ENCODE measurements at regions of chr12 and their contacts with region 1.

Region 1: GRCh38 chr12:122871851-122872780 is 23.8 kb downstream of the VPS37B start:
- DNase-seq: peak; percentile 84
- H3K4me3 ChIP-seq: peak overlapping the region in 2 of 3 experiments; percentile 25 to 60
- H3K27ac ChIP-seq: peak overlapping the region; percentile 92
- H3K4me1 ChIP-seq: peaks cover 32% of the 10 kb centered on the region
- H3K27me3 ChIP-seq: no peaks in the 10 kb centered on the region
- CTCF ChIP-seq: no peak
- POLR2A ChIP-seq: no peak

Region 2: DNA sequence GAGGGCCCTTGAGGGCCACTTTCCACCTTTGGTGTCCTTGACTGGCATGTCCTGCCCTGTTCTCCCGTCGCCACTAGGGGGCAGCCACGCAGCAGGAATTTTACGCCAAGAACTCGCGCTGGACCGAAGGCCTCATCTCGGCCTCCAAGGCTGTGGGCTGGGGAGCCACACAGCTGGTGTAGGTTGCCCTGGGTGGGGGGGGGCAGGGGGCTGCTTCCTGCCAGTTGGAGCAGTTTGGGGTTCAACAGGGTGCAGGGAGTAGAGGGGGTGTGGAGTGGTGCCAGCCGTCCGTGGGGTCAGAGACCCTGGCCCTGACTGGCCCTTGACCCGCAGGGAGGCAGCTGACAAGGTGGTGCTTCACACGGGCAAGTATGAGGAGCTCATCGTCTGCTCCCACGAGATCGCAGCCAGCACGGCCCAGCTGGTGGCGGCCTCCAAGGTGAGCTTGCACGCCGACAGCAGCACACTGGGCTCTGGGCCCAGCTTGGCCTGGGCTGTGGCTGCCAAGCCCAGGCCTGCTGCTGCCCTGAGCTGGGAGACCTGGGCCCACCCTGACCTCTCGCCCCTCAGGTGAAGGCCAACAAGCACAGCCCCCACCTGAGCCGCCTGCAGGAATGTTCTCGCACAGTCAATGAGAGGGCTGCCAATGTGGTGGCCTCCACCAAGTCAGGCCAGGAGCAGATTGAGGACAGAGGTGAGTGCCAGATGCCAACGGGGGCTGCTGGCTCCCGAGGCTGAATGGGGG is 11.6 kb before region 1 on chr12:
- CTCF ChIA-PET with region 1: interaction called, 15 read pairs
- POLR2A ChIA-PET with region 1: no interaction called
- dilution Hi-C with region 1: no loop called
- intact Hi-C with region 1: no loop called
- DNase-seq: peak; percentile 63
- H3K4me3 ChIP-seq: no peak overlapping the region
- H3K27ac ChIP-seq: no peak overlapping the region
- H3K4me1 ChIP-seq: no peaks in the 10 kb centered on the region
- H3K27me3 ChIP-seq: no peaks in the 10 kb centered on the region
- CTCF ChIP-seq: peak; percentile 80 to 88
- POLR2A ChIP-seq: no peak

Region 3: DNA sequence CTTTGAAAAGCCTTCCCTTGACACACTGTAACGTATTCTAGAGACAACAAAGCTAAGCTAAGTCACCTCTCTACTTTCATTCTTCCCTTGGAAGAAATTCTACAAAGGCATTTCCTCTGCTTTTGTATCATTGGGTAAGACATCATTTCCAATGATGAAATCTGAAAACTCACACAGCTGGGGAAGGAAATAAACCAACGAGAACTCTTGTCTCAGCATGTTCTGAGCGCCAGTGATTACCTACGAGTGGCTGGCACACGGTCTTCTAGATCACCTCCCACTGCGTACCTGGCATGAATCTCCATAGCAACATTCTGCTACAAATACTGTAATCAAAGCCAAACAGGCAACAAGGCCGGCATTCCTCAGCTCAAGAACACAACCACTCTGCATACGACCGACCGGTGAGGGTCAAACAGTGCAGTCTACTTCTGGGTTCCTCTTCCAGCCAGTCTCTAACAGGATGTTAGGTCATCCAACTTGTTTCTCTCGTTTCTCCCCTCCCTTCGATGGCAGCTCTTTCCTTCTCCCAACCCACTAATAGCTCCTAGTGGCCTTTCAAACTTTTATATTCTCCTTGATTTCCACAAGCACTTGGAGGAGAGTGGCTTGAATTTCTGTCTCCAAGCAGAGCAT is 16.2 kb after region 1 on chr12:
- CTCF ChIA-PET with region 1: interaction called, 15 read pairs
- POLR2A ChIA-PET with region 1: interaction called, 3 read pairs
- dilution Hi-C with region 1: no loop called
- intact Hi-C with region 1: loop called (anchors 1 kb)
- DNase-seq: peak; percentile 96
- H3K4me3 ChIP-seq: peak overlapping the region in 2 of 3 experiments; percentile 10 to 24
- H3K27ac ChIP-seq: peak overlapping the region; percentile 87
- H3K4me1 ChIP-seq: peaks cover 67% of the 10 kb centered on the region
- H3K27me3 ChIP-seq: no peaks in the 10 kb centered on the region
- CTCF ChIP-seq: no peak
- POLR2A ChIP-seq: peak; percentile 76

Region 4: GRCh38 chr12:123139926-123140675 is 268.0 kb after region 1 on chr12:
- CTCF ChIA-PET with region 1: no interaction called
- POLR2A ChIA-PET with region 1: no interaction called
- dilution Hi-C with region 1: no loop called
- intact Hi-C with region 1: no loop called
- DNase-seq: peak; percentile 24
- H3K4me3 ChIP-seq: no peak overlapping the region
- H3K27ac ChIP-seq: no peak overlapping the region
- H3K4me1 ChIP-seq: peaks cover 29% of the 10 kb centered on the region
- H3K27me3 ChIP-seq: no peaks in the 10 kb centered on the region
- CTCF ChIP-seq: no peak
- POLR2A ChIP-seq: no peak